ENCODE measurements at regions of chr9 and their contacts with region 1.

Region 1: DNA sequence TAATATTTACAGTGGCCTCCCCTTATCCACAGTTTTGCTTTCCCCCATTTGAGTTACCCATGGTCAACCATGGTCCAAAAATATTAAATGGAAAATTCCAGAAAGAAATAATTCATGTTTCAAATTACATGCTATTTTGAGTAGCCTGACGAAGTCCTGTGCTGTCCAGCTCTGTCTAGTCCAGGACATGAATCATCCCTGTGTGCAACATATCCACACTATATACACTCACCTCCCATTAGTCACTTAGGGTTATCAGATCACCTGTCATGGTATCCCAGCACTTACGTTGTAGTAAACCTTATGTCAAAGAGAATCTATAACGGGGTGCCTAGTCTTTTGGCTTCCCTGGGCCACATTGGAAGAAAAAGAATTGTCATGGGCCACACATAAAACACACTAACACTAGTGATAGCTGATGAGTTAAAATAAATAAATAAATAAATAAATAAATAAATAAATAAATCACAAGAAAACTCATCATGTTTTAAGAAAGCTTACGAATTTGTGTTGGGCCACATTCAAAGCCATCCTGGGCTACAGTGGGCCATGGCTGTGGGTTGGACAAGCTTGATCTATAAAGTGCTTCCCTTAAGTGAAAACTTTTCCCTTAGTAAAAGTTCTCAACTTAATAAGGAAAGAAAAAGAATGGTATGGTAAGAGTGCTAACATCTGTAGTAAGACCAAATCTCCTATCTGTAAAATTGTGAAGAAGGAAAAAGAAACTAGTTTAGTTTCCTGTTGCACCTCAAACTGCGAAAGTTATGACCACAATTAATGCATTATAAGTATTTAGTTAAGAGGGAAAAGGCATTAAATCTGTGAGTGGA is 15.9 kb upstream of the OMD start:
- DNase-seq: no peak
- ATAC-seq: no peak
- H3K4me3 ChIP-seq: no peak overlapping the region
- H3K27ac ChIP-seq: no peak overlapping the region
- H3K4me1 ChIP-seq: no peaks in the 10 kb centered on the region
- H3K27me3 ChIP-seq: no peaks in the 10 kb centered on the region
- CTCF ChIP-seq: no peak

Region 2: DNA sequence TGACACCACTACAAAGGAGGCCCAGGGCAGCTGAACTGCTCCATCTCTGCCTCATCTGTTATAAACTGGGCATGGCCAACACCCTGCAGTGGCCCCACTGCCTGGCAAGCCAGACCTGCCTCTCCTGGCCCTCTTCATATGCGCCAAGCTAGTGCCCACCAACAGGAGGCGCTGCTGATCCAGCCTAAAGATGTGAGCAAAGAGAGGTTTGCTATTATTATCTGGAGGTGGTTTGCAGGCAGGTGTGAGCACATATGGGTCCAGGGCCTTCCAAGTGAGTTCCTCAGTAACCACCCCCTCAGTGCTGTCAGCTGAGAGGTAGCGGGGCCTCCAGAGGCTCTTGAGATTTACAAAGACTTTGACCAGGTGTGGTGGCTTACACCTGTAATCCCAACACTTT is 1406.3 kb before region 1 on chr9:
- CTCF ChIA-PET with region 1: no interaction called
- POLR2A ChIA-PET with region 1: no interaction called
- in situ Hi-C with region 1: no loop called
- intact Hi-C with region 1: no loop called
- DNase-seq: no peak
- ATAC-seq: no peak
- H3K4me3 ChIP-seq: no peak overlapping the region
- H3K27ac ChIP-seq: no peak overlapping the region
- H3K4me1 ChIP-seq: peaks cover 12% of the 10 kb centered on the region
- H3K27me3 ChIP-seq: no peaks in the 10 kb centered on the region
- CTCF ChIP-seq: peak; percentile 72

Region 3: GRCh38 chr9:92325269-92325990 is 114.7 kb before region 1 on chr9 and contains the starts of genes CENPP and NOL8:
- CTCF ChIA-PET with region 1: interaction called, 7 read pairs
- POLR2A ChIA-PET with region 1: no interaction called
- in situ Hi-C with region 1: no loop called
- intact Hi-C with region 1: loop called (anchors 10 kb)
- DNase-seq: peak; percentile 60
- ATAC-seq: peak; percentile 97
- H3K4me3 ChIP-seq: peak within 1 kb of the TSS; percentile 91 to 97
- H3K27ac ChIP-seq: peak within 1 kb of the TSS; percentile 99
- H3K4me1 ChIP-seq: peaks cover 4% of the 10 kb centered on the region; the same call in 1 of the 2 replicates
- H3K27me3 ChIP-seq: no peaks in the 10 kb centered on the region
- CTCF ChIP-seq: no peak
- total RNA-seq, gene CENPP: 6.7 TPM
- total RNA-seq, gene NOL8: 30.6 TPM

Region 4: DNA sequence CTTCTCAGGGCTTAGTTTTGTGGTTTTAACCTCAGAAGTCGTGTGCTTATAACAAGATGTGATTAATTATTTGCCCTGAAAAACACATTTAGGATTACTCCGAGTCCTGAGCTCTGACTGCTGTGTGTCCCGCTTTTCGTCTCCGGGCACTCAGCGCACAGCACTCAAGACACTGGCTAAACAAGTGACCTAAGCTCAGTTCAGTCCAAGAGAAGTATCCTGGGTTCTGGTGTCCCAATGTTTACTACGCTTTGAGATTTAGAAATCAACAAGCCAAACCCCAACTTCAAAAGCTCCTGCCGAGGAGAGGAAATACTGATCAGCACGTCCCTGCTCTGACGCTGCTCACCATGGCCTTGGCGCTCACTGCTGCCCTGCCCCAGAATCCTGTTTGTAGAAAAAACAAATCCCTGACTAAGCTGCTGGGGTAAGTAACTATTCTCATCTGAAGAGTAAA is 176.5 kb after region 1 on chr9:
- CTCF ChIA-PET with region 1: no interaction called
- POLR2A ChIA-PET with region 1: no interaction called
- in situ Hi-C with region 1: no loop called
- intact Hi-C with region 1: no loop called
- DNase-seq: no peak
- ATAC-seq: no peak
- H3K4me3 ChIP-seq: no peak overlapping the region
- H3K27ac ChIP-seq: no peak overlapping the region
- H3K4me1 ChIP-seq: no peaks in the 10 kb centered on the region
- H3K27me3 ChIP-seq: no peaks in the 10 kb centered on the region
- CTCF ChIP-seq: no peak

Measured in Panc1 (cell line).